Spleen (tissue), 13 donors: ENCODE measurements at regions of chr2 and their contacts with region 1.

Region 1: GRCh38 chr2:54704688-54705605 is 18.5 kb upstream of the EML6 start:
- DNase-seq: no peak
- H3K4me3 ChIP-seq: no peak overlapping the region
- H3K27ac ChIP-seq: no peak overlapping the region
- H3K4me1 ChIP-seq: peaks cover 0 to 18% (median 14%) of the 10 kb centered on the region in 6 donors
- H3K27me3 ChIP-seq: peaks cover 0 to 24% (median 12%) of the 10 kb centered on the region in 7 donors
- CTCF ChIP-seq: peak in 10 of 11 experiments; percentile 43 to 76 (median 64)
- POLR2A ChIP-seq: no peak

Region 2: GRCh38 chr2:54106631-54107454 is 598.1 kb before region 1 on chr2:
- intact Hi-C with region 1: loop called (anchors 10 kb)
- DNase-seq: no peak
- H3K4me3 ChIP-seq: no peak overlapping the region
- H3K27ac ChIP-seq: no peak overlapping the region
- H3K4me1 ChIP-seq: peaks cover 12 to 37% (median 21%) of the 10 kb centered on the region in 6 donors
- H3K27me3 ChIP-seq: no peaks in the 10 kb centered on the region
- CTCF ChIP-seq: peak; percentile 55 to 86 (median 76)
- POLR2A ChIP-seq: no peak

Region 3: GRCh38 chr2:54528311-54528945 is 176.5 kb before region 1 on chr2:
- intact Hi-C with region 1: loop called (anchors 5 kb)
- DNase-seq: no peak
- H3K4me3 ChIP-seq: no peak overlapping the region
- H3K27ac ChIP-seq: no peak overlapping the region
- H3K4me1 ChIP-seq: peaks cover 0 to 37% (median 25%) of the 10 kb centered on the region in 6 donors
- H3K27me3 ChIP-seq: no peaks in the 10 kb centered on the region
- CTCF ChIP-seq: no peak
- POLR2A ChIP-seq: no peak